ENCODE measurements at regions of chr11 and their contacts with region 1.

Region 1: DNA sequence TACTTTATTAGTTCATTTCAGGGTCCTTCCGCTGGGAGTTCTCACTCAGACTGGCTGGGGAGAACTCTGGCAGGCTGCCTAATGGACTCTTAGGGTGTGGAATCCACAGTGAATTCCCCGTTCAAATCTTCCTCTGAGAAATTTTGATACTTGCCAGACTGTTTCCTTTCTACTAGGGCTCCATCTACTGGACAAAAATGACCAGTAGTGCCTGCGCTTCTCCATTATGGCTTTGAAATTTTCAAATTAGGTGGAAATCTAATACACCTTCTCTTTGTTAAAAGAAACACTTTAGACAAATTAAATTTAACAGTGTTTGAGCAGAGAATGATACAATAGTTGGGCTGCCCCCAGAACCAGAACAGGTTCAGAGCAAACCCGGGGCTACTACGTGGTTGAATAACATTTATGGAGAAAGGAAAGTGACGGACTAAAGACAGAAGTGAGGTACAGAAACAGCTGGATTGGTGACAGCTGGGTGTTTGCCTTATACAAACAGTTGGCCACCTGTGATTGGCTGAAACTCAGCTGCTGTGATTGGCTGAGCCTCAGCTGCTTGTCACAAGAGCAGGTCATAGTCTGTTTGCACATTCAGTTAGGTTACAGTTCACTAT is 52.9 kb upstream of the FDX1 start:
- DNase-seq: peak; percentile 46
- ATAC-seq: peak; percentile 94
- H3K4me3 ChIP-seq: no peak overlapping the region
- H3K27ac ChIP-seq: 0 out of 2 replicates have a peak overlapping the region, but pooled peaks have one; percentile 10
- H3K4me1 ChIP-seq: peaks cover 9% of the 10 kb centered on the region; the same call in 1 of the 2 replicates
- H3K27me3 ChIP-seq: no peaks in the 10 kb centered on the region
- CTCF ChIP-seq: peak; percentile 90

Region 2: DNA sequence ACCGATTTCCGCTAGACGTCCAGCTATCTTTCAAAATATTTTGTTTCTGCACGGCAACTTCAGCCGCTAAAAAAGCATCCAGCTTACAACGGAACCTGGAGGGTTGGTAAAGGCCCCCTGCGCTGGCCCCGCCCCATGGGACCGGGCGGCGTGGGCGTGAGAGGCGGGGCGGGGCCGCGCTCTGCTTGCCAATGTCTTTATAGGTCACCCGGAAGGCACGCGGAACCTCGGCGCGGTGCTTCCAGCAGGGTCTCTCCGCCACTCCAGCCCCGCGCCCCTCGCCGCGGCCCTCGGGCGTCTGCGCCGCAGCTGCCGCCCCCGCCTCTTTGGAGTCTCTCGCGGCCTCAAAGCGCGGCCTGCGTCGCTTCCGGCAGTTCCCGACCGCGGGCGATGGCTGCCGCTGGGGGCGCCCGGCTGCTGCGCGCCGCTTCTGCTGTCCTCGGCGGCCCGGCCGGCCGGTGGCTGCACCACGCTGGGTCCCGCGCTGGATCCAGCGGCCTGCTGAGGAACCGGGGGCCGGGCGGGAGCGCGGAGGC is 53.0 kb after region 1 on chr11 and contains the start of gene FDX1:
- CTCF ChIA-PET with region 1: no interaction called
- POLR2A ChIA-PET with region 1: no interaction called
- in situ Hi-C with region 1: no loop called
- intact Hi-C with region 1: loop called (anchors 5 kb)
- DNase-seq: no peak
- ATAC-seq: peak; percentile 94
- H3K4me3 ChIP-seq: peak within 1 kb of the TSS; percentile 80 to 87
- H3K27ac ChIP-seq: peak within 1 kb of the TSS; percentile 88
- H3K4me1 ChIP-seq: peaks cover 32% of the 10 kb centered on the region
- H3K27me3 ChIP-seq: no peaks in the 10 kb centered on the region
- CTCF ChIP-seq: peak; percentile 96
- total RNA-seq, gene FDX1: 13.6 TPM

Region 3: GRCh38 chr11:110797453-110797852 is 420.6 kb after region 1 on chr11:
- CTCF ChIA-PET with region 1: no interaction called
- POLR2A ChIA-PET with region 1: no interaction called
- in situ Hi-C with region 1: no loop called
- intact Hi-C with region 1: no loop called
- DNase-seq: no peak
- ATAC-seq: no peak
- H3K4me3 ChIP-seq: no peak overlapping the region
- H3K27ac ChIP-seq: no peak overlapping the region
- H3K4me1 ChIP-seq: no peaks in the 10 kb centered on the region; the same call in 1 of the 2 replicates
- H3K27me3 ChIP-seq: no peaks in the 10 kb centered on the region
- CTCF ChIP-seq: no peak